GM12878 (cell line): ENCODE measurements at regions of chr2 and their contacts with region 1.

Region 1: GRCh38 chr2:96536445-96537065 is at the start of gene ARID5A:
- DNase-seq: peak; percentile 44
- ATAC-seq: peak; percentile 78
- H3K4me3 ChIP-seq: peak within 1 kb of the TSS; percentile 94
- H3K27ac ChIP-seq: peak within 1 kb of the TSS; percentile 92
- H3K4me1 ChIP-seq: peaks cover 43% of the 10 kb centered on the region
- H3K27me3 ChIP-seq: no peaks in the 10 kb centered on the region
- CTCF ChIP-seq: peak in 1 of 3 experiments; percentile 26; a peak in 1 of 6 replicates
- EP300 ChIP-seq: no peak
- POLR2A ChIP-seq: peak; percentile 90
- RAD21 ChIP-seq: no peak
- polyA plus RNA-seq, gene ARID5A: 0.76 to 3.8 TPM

Region 2: GRCh38 chr2:96493072-96493471 is 43.5 kb before region 1 on chr2:
- CTCF ChIA-PET with region 1: interaction called, 4 read pairs
- POLR2A ChIA-PET with region 1: no interaction called
- RAD21 ChIA-PET with region 1: interaction called, 3 read pairs
- SMC1A ChIA-PET with region 1: interaction called, 13 read pairs
- in situ Hi-C with region 1: no loop called
- intact Hi-C with region 1: no loop called
- DNase-seq: no peak
- ATAC-seq: no peak
- H3K4me3 ChIP-seq: no peak overlapping the region
- H3K27ac ChIP-seq: no peak overlapping the region
- H3K4me1 ChIP-seq: peaks cover 11% of the 10 kb centered on the region; the same call in 1 of the 2 replicates
- H3K27me3 ChIP-seq: no peaks in the 10 kb centered on the region
- CTCF ChIP-seq: no peak
- EP300 ChIP-seq: no peak
- POLR2A ChIP-seq: no peak
- RAD21 ChIP-seq: no peak

Region 3: GRCh38 chr2:96554293-96555145 is 18.0 kb after region 1 on chr2:
- CTCF ChIA-PET with region 1: interaction called, 64 read pairs
- POLR2A ChIA-PET with region 1: interaction called, 6 read pairs
- RAD21 ChIA-PET with region 1: interaction called, 13 read pairs
- SMC1A ChIA-PET with region 1: interaction called, 17 read pairs
- in situ Hi-C with region 1: no loop called
- intact Hi-C with region 1: no loop called
- DNase-seq: no peak
- ATAC-seq: peak; percentile 79
- H3K4me3 ChIP-seq: no peak overlapping the region
- H3K27ac ChIP-seq: no peak overlapping the region
- H3K4me1 ChIP-seq: no peaks in the 10 kb centered on the region
- H3K27me3 ChIP-seq: no peaks in the 10 kb centered on the region
- CTCF ChIP-seq: peak; percentile 88 to 95 (median 91); a peak in 5 of 6 replicates
- EP300 ChIP-seq: no peak
- POLR2A ChIP-seq: peak; percentile 64
- RAD21 ChIP-seq: peak; percentile 77

Region 4: GRCh38 chr2:96960153-96960961 is 423.8 kb after region 1 on chr2:
- CTCF ChIA-PET with region 1: no interaction called
- POLR2A ChIA-PET with region 1: no interaction called
- RAD21 ChIA-PET with region 1: no interaction called
- SMC1A ChIA-PET with region 1: no interaction called
- in situ Hi-C with region 1: no loop called
- intact Hi-C with region 1: loop called (anchors 10 kb)
- DNase-seq: no peak
- ATAC-seq: peak; percentile 99
- H3K4me3 ChIP-seq: no peak overlapping the region
- H3K27ac ChIP-seq: no peak overlapping the region
- H3K4me1 ChIP-seq: peaks cover 14% of the 10 kb centered on the region
- H3K27me3 ChIP-seq: no peaks in the 10 kb centered on the region
- CTCF ChIP-seq: peak; percentile 94 to 97 (median 97)
- EP300 ChIP-seq: no peak
- POLR2A ChIP-seq: no peak
- RAD21 ChIP-seq: peak; percentile 85